ENCODE measurements at regions of chr12 and their contacts with region 1.

Region 1: GRCh38 chr12:75087654-75088053 is 122.0 kb downstream of the KCNC2 start:
- DNase-seq: no peak
- ATAC-seq: no peak
- H3K4me3 ChIP-seq: no peak overlapping the region
- H3K27ac ChIP-seq: no peak overlapping the region
- H3K4me1 ChIP-seq: no peaks in the 10 kb centered on the region
- H3K27me3 ChIP-seq: no peaks in the 10 kb centered on the region
- CTCF ChIP-seq: 0 out of 2 replicates have a peak, but pooled peaks have one; percentile 22
- EP300 ChIP-seq: no peak
- POLR2A ChIP-seq: no peak
- RAD21 ChIP-seq: no peak

Region 2: DNA sequence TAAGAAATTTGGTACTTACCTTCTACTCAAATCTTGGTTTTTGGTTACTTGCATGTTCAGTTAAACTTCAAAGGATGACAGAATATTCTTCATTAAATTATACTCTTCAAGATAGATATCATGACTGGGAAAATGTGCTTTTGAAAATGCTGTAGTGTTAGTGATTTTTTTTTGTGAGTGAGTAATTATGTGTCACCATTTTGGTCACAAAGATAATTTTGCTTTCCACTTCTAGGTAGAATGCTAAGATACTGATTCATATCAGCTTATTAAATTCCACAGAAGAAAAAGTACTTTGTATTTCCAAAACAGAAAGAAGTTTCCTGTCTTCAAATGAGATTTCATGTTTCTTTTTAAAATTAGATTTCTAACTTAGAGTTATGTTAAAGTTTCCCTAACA is 488.8 kb before region 1 on chr12:
- CTCF ChIA-PET with region 1: no interaction called
- POLR2A ChIA-PET with region 1: no interaction called
- in situ Hi-C with region 1: no loop called
- intact Hi-C with region 1: no loop called
- DNase-seq: no peak
- ATAC-seq: no peak
- H3K4me3 ChIP-seq: no peak overlapping the region
- H3K27ac ChIP-seq: no peak overlapping the region
- H3K4me1 ChIP-seq: no peaks in the 10 kb centered on the region
- H3K27me3 ChIP-seq: no peaks in the 10 kb centered on the region; a peak in 1 of 5 replicates
- CTCF ChIP-seq: no peak
- EP300 ChIP-seq: no peak
- POLR2A ChIP-seq: no peak
- RAD21 ChIP-seq: no peak

Region 3: DNA sequence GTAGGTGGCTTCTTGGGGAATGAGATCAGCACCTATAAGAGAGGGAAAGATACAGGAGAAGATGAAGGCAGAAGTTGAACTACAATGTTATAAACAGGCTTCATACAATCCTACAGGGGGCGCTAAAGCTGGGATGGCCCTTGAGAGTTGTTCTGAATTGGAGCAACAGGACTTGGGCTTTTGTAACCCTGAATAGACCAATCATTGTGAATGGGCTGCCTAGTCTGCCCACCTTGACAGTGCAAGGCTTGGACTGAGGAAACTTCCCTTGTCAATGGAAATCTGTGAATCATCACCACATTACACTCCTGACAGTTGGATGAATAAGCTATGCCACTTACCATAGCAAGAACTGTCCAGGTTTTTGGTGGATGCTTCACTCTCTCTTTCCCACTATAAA is 184.1 kb before region 1 on chr12:
- CTCF ChIA-PET with region 1: no interaction called
- POLR2A ChIA-PET with region 1: no interaction called
- in situ Hi-C with region 1: no loop called
- intact Hi-C with region 1: loop called (anchors 5 kb)
- DNase-seq: peak; percentile 9
- ATAC-seq: no peak; the same call in 2 of the 3 replicates
- H3K4me3 ChIP-seq: no peak overlapping the region
- H3K27ac ChIP-seq: no peak overlapping the region
- H3K4me1 ChIP-seq: no peaks in the 10 kb centered on the region
- H3K27me3 ChIP-seq: no peaks in the 10 kb centered on the region; a peak in 1 of 5 replicates
- CTCF ChIP-seq: peak; percentile 26; the same call in 1 of the 2 replicates
- EP300 ChIP-seq: no peak
- POLR2A ChIP-seq: no peak
- RAD21 ChIP-seq: no peak

Region 4: DNA sequence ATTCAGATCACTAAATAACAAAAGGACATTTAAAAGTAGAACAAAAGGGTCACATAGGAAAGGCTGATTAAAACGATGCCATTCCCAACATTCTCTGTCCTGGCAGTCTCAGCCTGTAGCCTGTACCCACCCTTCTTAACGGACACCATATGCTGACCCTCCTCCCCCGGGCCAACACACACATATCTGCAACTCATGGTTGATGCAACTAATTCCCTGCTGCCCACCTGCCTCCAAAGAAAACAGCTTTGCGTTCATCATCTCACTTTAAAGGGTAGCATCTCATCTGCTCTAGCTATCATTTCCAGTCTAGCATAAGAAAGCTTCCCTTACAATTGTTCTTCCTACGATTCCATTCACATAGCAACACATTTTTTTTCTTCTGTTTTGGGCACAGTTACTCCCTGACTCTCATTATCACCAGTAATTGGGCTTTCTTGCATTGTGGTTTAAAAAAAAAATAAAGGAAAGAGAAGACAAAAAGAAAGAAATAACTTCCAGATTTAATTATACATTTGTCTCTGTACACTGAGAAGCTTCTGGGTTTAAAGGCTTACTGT is 29.1 kb after region 1 on chr12:
- CTCF ChIA-PET with region 1: no interaction called
- POLR2A ChIA-PET with region 1: no interaction called
- in situ Hi-C with region 1: no loop called
- intact Hi-C with region 1: no loop called
- DNase-seq: no peak
- ATAC-seq: no peak
- H3K4me3 ChIP-seq: no peak overlapping the region
- H3K27ac ChIP-seq: no peak overlapping the region
- H3K4me1 ChIP-seq: no peaks in the 10 kb centered on the region
- H3K27me3 ChIP-seq: no peaks in the 10 kb centered on the region; a peak in 1 of 5 replicates
- CTCF ChIP-seq: no peak
- EP300 ChIP-seq: no peak
- POLR2A ChIP-seq: no peak
- RAD21 ChIP-seq: no peak

Region 5: GRCh38 chr12:75154388-75154787 is 66.7 kb after region 1 on chr12:
- CTCF ChIA-PET with region 1: no interaction called
- POLR2A ChIA-PET with region 1: no interaction called
- in situ Hi-C with region 1: no loop called
- intact Hi-C with region 1: no loop called
- DNase-seq: no peak
- ATAC-seq: no peak
- H3K4me3 ChIP-seq: no peak overlapping the region
- H3K27ac ChIP-seq: no peak overlapping the region
- H3K4me1 ChIP-seq: no peaks in the 10 kb centered on the region
- H3K27me3 ChIP-seq: no peaks in the 10 kb centered on the region
- CTCF ChIP-seq: no peak
- EP300 ChIP-seq: no peak
- POLR2A ChIP-seq: no peak
- RAD21 ChIP-seq: no peak